HEK293T (cell line): ENCODE measurements at regions of chr5 and their contacts with region 1.

Region 1: DNA sequence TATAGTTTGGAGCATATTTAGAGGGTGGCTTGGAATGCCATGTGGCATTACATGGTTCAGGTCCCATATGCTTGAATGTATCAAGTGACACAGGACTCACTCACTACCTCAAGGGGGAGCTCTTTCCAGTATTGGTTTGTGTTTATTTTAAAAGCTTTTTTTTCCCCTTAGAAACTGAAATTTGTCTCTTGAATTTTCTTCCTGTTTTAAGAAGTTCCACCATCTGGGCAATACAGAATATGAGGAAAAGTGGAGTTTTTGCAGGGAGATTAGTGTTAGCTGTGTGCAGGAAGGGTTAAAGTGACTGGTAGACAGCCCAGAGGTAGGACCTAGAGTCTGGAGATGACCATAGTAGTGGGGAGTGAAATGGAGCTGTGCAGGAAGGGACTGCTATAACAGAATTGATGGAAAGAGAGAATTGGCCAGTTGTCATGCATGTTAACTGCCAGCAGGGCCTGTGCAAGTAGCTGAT is 36.6 kb downstream of the CTNNA1 start:
- DNase-seq: peak; percentile 61

Region 2: DNA sequence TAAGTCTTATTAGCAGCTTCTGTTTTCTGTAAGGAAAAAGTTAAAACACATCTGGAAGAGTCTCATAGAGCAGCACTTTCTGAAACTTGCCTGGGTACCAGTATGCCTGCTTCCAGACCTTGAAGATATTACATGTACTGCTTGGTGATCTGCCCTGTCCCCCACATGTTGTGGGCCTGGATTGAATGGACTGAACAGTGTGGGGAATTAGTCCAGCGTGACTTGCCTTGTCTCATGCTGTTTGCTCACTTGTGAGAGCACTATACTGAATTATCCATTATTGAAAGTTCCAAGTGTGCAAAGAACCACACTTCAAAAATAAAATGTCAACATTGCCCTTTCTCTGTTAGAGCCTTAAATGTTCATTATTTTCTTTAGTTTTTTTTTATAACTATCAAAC is 27.7 kb before region 1 on chr5:
- CTCF ChIA-PET with region 1: interaction called, 12 read pairs
- POLR2A ChIA-PET with region 1: no interaction called
- DNase-seq: no peak

Region 3: DNA sequence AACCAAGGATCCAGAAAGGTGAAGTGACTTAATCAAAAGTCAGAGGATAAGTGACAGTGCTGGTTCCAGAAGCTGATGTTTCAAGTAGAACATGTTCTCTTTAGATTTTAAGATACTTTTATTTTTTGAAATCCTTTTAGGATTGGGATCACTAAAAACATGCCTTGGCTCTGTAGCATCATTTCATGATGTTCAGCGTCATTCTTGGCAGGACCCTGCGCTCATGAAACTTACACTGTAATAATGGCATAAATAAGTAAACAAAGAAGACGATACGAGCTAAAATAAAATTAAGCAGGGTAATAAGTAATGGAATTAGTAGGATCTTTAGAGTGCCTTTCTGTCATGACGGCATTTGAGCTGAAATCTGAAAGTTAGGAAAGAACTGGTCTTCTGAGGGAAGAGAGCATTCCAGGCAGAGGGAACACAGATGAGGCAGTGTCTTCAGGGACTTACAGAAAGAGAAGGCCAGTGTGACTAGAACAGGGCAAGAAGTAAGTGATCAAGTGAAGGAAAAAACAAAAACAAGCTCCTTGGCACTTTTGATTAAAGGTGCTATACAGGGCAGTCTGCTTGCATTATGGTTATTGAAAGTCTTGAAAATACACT is 16.7 kb before region 1 on chr5:
- CTCF ChIA-PET with region 1: interaction called, 12 read pairs
- POLR2A ChIA-PET with region 1: no interaction called
- DNase-seq: no peak

Region 4: DNA sequence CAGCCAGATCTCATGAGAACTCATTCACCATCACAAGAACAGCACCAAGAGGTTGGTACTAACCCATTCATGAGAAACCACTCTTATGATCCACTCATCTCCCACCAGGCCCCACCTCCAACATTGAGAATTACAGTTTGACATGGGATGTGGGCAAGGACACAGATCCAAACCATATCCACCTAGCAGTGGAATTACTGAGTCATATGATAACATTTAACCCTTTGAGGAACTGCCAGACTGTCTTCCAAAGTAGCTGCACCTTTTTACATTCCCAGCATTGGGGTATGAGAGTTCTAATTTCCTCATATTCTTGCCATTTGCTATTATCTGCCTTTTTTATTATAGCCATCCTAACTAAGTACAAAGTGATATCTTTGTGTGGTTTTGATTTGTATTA is 15.3 kb after region 1 on chr5:
- CTCF ChIA-PET with region 1: interaction called, 31 read pairs
- POLR2A ChIA-PET with region 1: no interaction called
- DNase-seq: no peak

Region 5: GRCh38 chr5:138824924-138825863 is 35.4 kb after region 1 on chr5:
- CTCF ChIA-PET with region 1: interaction called, 12 read pairs
- POLR2A ChIA-PET with region 1: no interaction called
- DNase-seq: peak; percentile 22